Kidney (tissue), 22 donors: ENCODE measurements at regions of chr17 and their contacts with region 1.

Region 1: GRCh38 chr17:73429440-73430164 is 117.8 kb upstream of the CDC42EP4 start:
- DNase-seq: peak; percentile 87 to 95 (median 90)
- H3K4me3 ChIP-seq: no peak overlapping the region
- H3K27ac ChIP-seq: no peak overlapping the region
- H3K4me1 ChIP-seq: no peaks in the 10 kb centered on the region
- H3K27me3 ChIP-seq: no peaks in the 10 kb centered on the region
- CTCF ChIP-seq: peak; percentile 86

Region 2: GRCh38 chr17:73365906-73366623 is 63.5 kb before region 1 on chr17:
- intact Hi-C with region 1: no loop called
- DNase-seq: peak in 4 of 5 donors; percentile 22 to 86 (median 56)
- H3K4me3 ChIP-seq: no peak overlapping the region
- H3K27ac ChIP-seq: peak overlapping the region; percentile 16 to 69
- H3K4me1 ChIP-seq: no peaks in the 10 kb centered on the region
- H3K27me3 ChIP-seq: no peaks in the 10 kb centered on the region
- CTCF ChIP-seq: no peak

Region 3: DNA sequence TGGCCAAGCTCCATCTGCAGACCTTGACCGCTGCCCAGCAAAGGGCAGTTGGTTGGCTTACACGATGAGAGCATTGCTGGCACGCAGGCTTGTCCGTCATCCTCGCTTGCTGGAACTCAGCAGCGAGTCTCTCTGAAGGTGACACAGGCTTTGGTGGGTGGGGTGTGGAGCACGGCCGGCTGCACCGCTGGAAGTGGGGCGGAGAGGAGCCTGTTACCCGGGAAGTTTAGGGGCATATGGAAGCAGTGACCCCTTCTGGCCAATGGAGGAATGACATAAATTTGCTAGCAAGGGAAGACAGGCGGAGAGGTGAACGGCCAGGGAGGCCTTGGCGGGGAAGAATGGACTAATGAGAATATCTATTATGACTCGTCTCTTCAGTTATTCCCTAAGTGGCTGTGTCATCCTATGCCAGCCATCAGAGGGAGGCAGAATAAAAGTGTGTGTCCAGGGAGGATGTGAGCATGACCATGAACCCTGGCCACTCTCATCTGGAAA is 280.5 kb after region 1 on chr17:
- intact Hi-C with region 1: loop called (anchors 5 kb)
- DNase-seq: peak; percentile 76 to 90 (median 86)
- H3K4me3 ChIP-seq: no peak overlapping the region
- H3K27ac ChIP-seq: no peak overlapping the region
- H3K4me1 ChIP-seq: no peaks in the 10 kb centered on the region
- H3K27me3 ChIP-seq: no peaks in the 10 kb centered on the region
- CTCF ChIP-seq: peak; percentile 74